Cardiac septum (tissue), 1 donor: ENCODE measurements at regions of chr2 and their contacts with region 1.

Region 1: DNA sequence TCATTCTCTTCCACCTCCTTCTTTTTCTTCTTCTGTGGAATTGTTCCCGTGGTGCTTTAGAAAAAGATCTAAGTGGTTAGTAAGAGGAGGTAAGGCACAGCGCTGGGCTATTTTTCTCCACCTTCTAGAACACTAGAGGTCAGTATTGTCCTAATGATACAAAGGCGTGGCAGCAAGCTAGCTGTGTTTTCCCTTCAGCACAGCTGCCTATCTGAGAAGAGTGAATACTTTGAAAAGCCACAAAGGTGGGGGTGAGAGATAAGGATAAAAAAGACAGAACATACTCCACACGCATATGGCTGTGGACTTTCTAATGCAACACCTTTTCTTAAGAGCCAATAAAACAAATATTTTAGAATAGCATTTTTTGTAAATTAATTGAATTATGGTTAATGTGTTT is 2.1 kb downstream of the CNTNAP5 start:
- DNase-seq: no peak

Region 2: GRCh38 chr2:124145982-124146381 is 118.8 kb after region 1 on chr2:
- intact Hi-C with region 1: no loop called
- DNase-seq: no peak

Region 3: DNA sequence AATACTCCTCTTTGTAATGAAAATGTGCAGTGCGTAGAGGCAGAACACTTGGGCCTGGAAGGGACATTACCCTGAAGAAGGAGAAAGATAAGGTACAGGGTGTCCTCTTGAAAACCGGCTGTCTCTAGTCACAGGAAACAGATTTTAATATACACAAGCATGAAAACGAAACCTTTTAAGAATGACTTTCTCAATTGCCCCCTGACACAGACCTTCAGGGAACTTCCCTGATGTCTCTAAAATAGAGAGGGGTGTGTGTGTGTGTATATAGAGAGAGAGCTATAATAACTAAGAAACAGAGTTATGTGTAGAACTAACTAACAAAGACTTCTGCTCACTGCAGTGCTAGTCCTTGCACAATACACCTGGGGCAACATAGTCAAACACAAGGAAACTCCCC is 777.9 kb after region 1 on chr2:
- intact Hi-C with region 1: loop called (anchors 5 kb)
- DNase-seq: no peak